HCT116 (cell line): ENCODE measurements at regions of chr6 and their contacts with region 1.

Region 1: GRCh38 chr6:135535989-135536414 is 38.5 kb upstream of the AHI1 start:
- DNase-seq: peak; percentile 31
- ATAC-seq: peak; percentile 74
- H3K4me3 ChIP-seq: no peak overlapping the region
- H3K27ac ChIP-seq: no peak overlapping the region
- H3K4me1 ChIP-seq: peaks cover 0 to 14% of the 10 kb centered on the region in 2 experiments; a peak in 2 of 4 replicates
- H3K27me3 ChIP-seq: no peaks in the 10 kb centered on the region
- CTCF ChIP-seq: peak; percentile 61 to 79 (median 74); a peak in 5 of 6 replicates
- POLR2A ChIP-seq: no peak
- RAD21 ChIP-seq: peak; percentile 80

Region 2: GRCh38 chr6:135243871-135244796 is 291.9 kb before region 1 on chr6:
- CTCF ChIA-PET with region 1: no interaction called
- POLR2A ChIA-PET with region 1: no interaction called
- RAD21 ChIA-PET with region 1: no interaction called
- intact Hi-C with region 1: no loop called
- DNase-seq: no peak
- ATAC-seq: no peak
- H3K4me3 ChIP-seq: no peak overlapping the region
- H3K27ac ChIP-seq: no peak overlapping the region
- H3K4me1 ChIP-seq: no peaks in the 10 kb centered on the region
- H3K27me3 ChIP-seq: no peaks in the 10 kb centered on the region
- CTCF ChIP-seq: no peak
- POLR2A ChIP-seq: no peak
- RAD21 ChIP-seq: no peak

Region 3: DNA sequence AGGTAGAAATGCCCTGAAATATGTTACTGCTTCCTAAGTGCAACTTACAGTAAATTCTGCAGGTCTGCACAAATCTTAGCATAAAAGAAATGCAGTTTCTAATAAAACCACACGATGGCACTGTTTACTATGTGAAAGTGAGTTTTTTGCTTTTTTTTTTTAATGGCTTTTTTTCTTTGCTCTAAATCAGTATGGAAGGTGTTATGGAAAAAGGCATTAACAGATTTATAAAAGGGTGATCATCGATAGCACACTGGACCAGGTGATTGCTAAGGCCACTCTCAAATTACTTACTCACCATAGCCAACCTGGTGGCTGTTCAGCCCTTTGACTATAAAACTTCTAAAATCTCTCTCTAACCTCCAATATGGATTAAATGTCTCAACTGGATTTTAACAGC is 84.3 kb before region 1 on chr6:
- CTCF ChIA-PET with region 1: interaction called, 5 read pairs
- POLR2A ChIA-PET with region 1: no interaction called
- RAD21 ChIA-PET with region 1: no interaction called
- intact Hi-C with region 1: loop called (anchors 2 kb)
- DNase-seq: peak; percentile 22
- ATAC-seq: no peak
- H3K4me3 ChIP-seq: no peak overlapping the region
- H3K27ac ChIP-seq: no peak overlapping the region
- H3K4me1 ChIP-seq: no peaks in the 10 kb centered on the region
- H3K27me3 ChIP-seq: no peaks in the 10 kb centered on the region
- CTCF ChIP-seq: peak; percentile 34 to 69 (median 43); a peak in 5 of 6 replicates
- POLR2A ChIP-seq: no peak
- RAD21 ChIP-seq: peak; percentile 63

Region 4: GRCh38 chr6:135759831-135760230 is 223.8 kb after region 1 on chr6:
- CTCF ChIA-PET with region 1: interaction called, 12 read pairs
- POLR2A ChIA-PET with region 1: no interaction called
- RAD21 ChIA-PET with region 1: no interaction called
- intact Hi-C with region 1: loop called (anchors 2 kb)
- DNase-seq: peak; percentile 15
- ATAC-seq: peak; percentile 64; the same call in 1 of the 2 replicates
- H3K4me3 ChIP-seq: no peak overlapping the region
- H3K27ac ChIP-seq: no peak overlapping the region
- H3K4me1 ChIP-seq: no peaks in the 10 kb centered on the region
- H3K27me3 ChIP-seq: no peaks in the 10 kb centered on the region
- CTCF ChIP-seq: peak; percentile 22 to 44 (median 32); a peak in 3 of 6 replicates
- POLR2A ChIP-seq: no peak
- RAD21 ChIP-seq: peak; percentile 61

Region 5: DNA sequence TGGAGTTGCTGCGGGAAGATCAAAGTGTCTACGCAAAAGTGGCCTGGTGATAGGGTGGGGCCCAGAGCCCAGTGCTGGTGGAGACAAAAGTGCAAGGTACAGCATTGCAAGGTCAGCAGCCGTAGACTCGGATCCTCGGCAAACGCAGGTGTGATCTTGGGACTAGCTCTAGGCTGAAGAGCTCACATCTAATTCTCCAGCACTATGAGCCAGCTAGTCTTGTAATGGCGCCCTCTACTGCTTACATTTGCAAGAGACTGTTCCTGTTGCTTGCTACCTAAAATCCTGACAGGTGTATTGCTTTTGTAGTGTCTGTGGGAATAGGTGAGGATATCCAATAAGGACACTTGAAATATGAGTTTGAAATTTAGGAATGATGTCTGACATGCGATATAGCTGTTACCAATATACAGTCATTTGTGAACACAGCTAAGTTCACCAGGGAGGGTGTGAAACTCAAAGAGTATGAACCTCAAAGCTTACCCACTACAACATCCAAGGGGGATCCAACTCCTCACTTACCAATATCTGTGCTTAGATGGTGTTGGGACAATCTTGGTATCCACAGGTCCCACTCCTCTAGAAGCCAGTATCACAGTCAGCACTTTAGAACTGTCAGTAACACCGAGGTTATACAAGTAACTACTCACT is 373.9 kb after region 1 on chr6:
- CTCF ChIA-PET with region 1: interaction called, 24 read pairs
- POLR2A ChIA-PET with region 1: no interaction called
- RAD21 ChIA-PET with region 1: interaction called, 3 to 6 read pairs
- intact Hi-C with region 1: loop called (anchors 1 kb)
- DNase-seq: peak; percentile 76
- ATAC-seq: peak; percentile 99
- H3K4me3 ChIP-seq: no peak overlapping the region
- H3K27ac ChIP-seq: no peak overlapping the region
- H3K4me1 ChIP-seq: peaks cover 0 to 1% of the 10 kb centered on the region in 2 experiments; a peak in 2 of 4 replicates
- H3K27me3 ChIP-seq: no peaks in the 10 kb centered on the region
- CTCF ChIP-seq: peak; percentile 59 to 85 (median 73)
- POLR2A ChIP-seq: no peak
- RAD21 ChIP-seq: peak; percentile 72

Region 6: DNA sequence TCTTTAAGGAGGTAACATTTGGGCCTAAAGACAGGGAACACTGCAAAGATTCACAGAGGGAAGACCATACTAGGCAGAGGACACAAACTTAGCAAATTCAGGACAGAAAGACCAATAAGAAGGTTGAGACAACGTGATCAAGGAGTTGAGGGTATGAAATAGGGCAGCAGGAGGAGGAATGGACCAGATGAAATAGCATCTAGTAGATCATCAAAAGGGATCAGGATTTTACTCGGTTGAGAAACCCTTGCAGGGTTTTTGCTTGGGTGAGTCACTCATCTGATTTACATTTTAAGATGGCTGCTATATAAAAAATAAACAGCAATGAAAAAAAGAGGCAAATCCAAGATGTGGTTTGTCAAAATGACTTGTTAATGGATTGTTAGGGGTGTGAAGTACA is 748.9 kb after region 1 on chr6:
- CTCF ChIA-PET with region 1: no interaction called
- POLR2A ChIA-PET with region 1: no interaction called
- RAD21 ChIA-PET with region 1: no interaction called
- intact Hi-C with region 1: no loop called
- DNase-seq: no peak
- ATAC-seq: no peak
- H3K4me3 ChIP-seq: no peak overlapping the region
- H3K27ac ChIP-seq: no peak overlapping the region
- H3K4me1 ChIP-seq: peaks cover 4 to 16% of the 10 kb centered on the region in 2 experiments; a peak in 3 of 4 replicates
- H3K27me3 ChIP-seq: no peaks in the 10 kb centered on the region
- CTCF ChIP-seq: no peak
- POLR2A ChIP-seq: no peak
- RAD21 ChIP-seq: no peak

Region 7: GRCh38 chr6:136317021-136317694 is 781.2 kb after region 1 on chr6:
- CTCF ChIA-PET with region 1: interaction called, 7 read pairs
- POLR2A ChIA-PET with region 1: no interaction called
- RAD21 ChIA-PET with region 1: no interaction called
- intact Hi-C with region 1: loop called (anchors 10 kb)
- DNase-seq: peak; percentile 71
- ATAC-seq: peak; percentile 95
- H3K4me3 ChIP-seq: no peak overlapping the region
- H3K27ac ChIP-seq: no peak overlapping the region
- H3K4me1 ChIP-seq: peaks cover 0 to 3% of the 10 kb centered on the region in 2 experiments; a peak in 1 of 4 replicates
- H3K27me3 ChIP-seq: no peaks in the 10 kb centered on the region
- CTCF ChIP-seq: peak; percentile 48 to 87 (median 77); a peak in 5 of 6 replicates
- POLR2A ChIP-seq: no peak
- RAD21 ChIP-seq: peak; percentile 84

Region 8: GRCh38 chr6:136550330-136551071 is 1014.5 kb after region 1 on chr6 and contains the start of gene MAP7:
- CTCF ChIA-PET with region 1: no interaction called
- POLR2A ChIA-PET with region 1: no interaction called
- RAD21 ChIA-PET with region 1: no interaction called
- intact Hi-C with region 1: loop called (anchors 10 kb)
- DNase-seq: peak; percentile 75
- ATAC-seq: peak; percentile 96
- H3K4me3 ChIP-seq: peak within 1 kb of the TSS; percentile 75 to 79
- H3K27ac ChIP-seq: peak within 1 kb of the TSS; percentile 69
- H3K4me1 ChIP-seq: peaks cover 6 to 17% of the 10 kb centered on the region in 2 experiments; a peak in 3 of 4 replicates
- H3K27me3 ChIP-seq: no peaks in the 10 kb centered on the region
- CTCF ChIP-seq: peak; percentile 63 to 83 (median 81)
- POLR2A ChIP-seq: no peak
- RAD21 ChIP-seq: peak; percentile 73
- total RNA-seq, gene MAP7: 35.5 TPM